Aorta (tissue), 5 donors: ENCODE measurements at regions of chr18 and their contacts with region 1.

Region 1: DNA sequence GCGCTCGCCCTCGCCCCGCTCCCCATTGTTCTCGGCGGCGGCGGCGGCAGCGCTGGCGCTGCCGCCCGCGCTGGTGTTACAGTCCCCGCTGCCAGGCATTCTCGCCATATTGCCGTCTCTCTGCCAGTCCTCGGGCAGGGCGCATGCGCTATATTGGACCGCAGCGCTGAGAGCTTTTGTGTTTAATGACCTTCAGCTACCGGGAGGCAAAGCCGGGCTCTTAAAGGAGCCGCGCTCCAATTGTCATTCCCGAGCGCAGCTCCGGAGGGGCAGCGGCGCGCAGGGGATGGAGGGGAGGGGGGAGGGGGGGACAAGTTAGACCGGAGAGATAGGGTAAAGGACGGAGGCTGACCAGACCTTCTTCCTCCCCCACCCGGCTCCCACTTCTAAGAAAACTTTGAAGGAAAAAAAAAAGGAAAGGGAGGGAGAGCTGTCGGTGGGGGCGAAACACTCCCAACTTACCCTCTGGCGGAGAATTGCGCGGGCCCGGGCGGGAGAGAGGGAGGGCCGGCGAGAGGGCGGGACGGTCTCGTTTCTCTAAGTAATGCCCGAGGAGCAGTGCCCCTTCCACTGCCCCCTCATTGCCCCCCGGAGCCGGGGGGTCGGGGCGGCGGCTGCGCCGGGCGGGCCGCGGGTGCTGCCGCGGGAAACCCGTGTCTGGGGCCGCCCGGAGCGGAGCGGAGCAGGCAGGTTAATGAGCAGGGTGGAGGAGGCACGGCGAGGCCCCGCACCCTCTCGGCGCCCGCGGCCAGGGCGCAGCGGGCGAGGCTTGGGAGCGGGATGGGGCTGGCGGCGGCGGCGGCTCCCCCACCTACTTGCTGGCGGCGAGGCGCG is at the start of gene KCTD1:
- DNase-seq: peak; percentile 89 to 90
- ATAC-seq: peak; percentile 61
- H3K4me3 ChIP-seq: peak within 1 kb of the TSS; percentile 73 to 91
- H3K27ac ChIP-seq: peak within 1 kb of the TSS in 1 of 2 donors; percentile 6
- H3K4me1 ChIP-seq: no peaks in the 10 kb centered on the region
- H3K27me3 ChIP-seq: no peaks in the 10 kb centered on the region
- total RNA-seq, gene KCTD1: 10.7 to 13.2 TPM

Region 2: GRCh38 chr18:26226229-26227005 is 322.2 kb before region 1 on chr18 and contains the start of gene TAF4B:
- intact Hi-C with region 1: loop called in 1 of 2 experiments (anchors 10 kb)
- DNase-seq: peak; percentile 96 to 98
- ATAC-seq: peak; percentile 99
- H3K4me3 ChIP-seq: peak within 1 kb of the TSS; percentile 46 to 73
- H3K27ac ChIP-seq: no peak within 1 kb of the TSS
- H3K4me1 ChIP-seq: no peaks in the 10 kb centered on the region
- H3K27me3 ChIP-seq: no peaks in the 10 kb centered on the region
- total RNA-seq, gene TAF4B: 3.9 to 4.2 TPM

Region 3: GRCh38 chr18:26307189-26307773 is 241.4 kb before region 1 on chr18:
- intact Hi-C with region 1: loop called in 1 of 2 experiments (anchors 10 kb)
- DNase-seq: no peak
- ATAC-seq: no peak
- H3K4me3 ChIP-seq: no peak overlapping the region
- H3K27ac ChIP-seq: no peak overlapping the region
- H3K4me1 ChIP-seq: no peaks in the 10 kb centered on the region
- H3K27me3 ChIP-seq: no peaks in the 10 kb centered on the region

Region 4: DNA sequence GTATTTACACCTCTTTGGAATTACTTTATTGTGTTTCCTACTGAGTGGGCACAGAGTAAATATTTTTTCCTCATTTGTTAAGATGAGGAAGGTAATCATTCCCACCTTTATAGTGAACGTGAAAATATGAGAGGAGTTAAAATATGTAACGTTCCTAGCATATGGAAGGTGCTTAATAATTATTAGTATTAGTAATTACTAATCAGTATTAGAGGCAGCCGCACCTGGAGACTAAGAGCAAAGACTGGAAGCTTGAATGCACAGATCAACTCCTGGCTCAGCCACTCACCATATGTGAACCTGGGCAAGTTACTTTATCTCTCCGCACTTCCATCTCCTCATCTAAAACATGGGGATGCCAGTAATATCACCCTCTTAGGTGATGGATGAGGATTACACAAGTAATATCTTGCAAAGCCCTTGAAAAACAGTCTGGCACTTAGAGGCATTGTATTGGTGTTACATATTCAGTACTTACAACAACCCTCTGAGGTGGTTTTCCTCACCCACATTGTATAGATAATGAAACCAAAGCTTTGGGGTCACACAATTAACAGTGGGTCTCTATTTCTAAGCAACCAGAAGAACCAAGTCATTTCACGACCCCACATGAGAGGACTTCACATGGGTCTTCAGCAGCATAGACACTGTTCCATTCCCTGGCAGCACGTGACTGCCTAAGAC is 100.0 kb after region 1 on chr18:
- intact Hi-C with region 1: loop called in 1 of 2 experiments (anchors 5 kb)
- DNase-seq: no peak
- ATAC-seq: no peak
- H3K4me3 ChIP-seq: no peak overlapping the region
- H3K27ac ChIP-seq: no peak overlapping the region
- H3K4me1 ChIP-seq: no peaks in the 10 kb centered on the region
- H3K27me3 ChIP-seq: no peaks in the 10 kb centered on the region